ENCODE measurements at regions of chr15 and their contacts with region 1.

Region 1: DNA sequence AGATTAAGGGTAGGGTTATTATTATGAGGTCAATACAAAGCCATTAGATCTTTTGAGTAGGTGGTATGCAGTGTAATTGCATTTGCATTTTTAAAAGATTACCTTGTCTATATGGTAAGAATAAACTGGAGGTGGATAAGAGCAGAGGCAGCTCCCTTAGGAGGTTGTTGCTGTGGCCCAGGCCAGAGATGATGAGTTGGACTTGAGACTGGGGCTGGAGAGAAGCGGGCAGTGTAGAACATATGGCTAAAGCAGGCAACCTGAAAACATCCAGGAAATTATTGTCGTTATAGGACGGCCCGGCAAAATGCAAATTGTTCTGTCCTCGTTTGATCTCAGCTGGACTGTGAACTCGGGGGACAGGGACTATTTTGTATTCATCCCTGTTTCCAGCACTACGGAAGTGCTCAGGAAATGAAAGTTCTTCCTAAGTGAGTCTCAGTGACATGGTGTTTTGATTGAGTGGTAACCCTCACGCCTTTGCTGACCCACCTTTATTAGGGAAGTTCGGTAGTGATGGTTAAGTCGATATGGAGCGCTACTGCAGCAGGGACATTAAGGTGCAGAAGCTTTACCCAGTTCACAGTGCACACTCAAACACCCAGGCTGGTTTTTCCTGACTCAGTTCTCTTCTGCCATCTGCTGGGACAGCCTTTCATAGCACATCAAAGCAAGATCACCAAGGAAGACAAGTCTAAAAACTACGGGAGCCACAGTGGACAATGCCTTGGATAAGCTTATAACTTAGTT is 27.2 kb upstream of the VPS33B start:
- DNase-seq: peak; percentile 73
- ATAC-seq: peak; percentile 94
- H3K4me3 ChIP-seq: no peak overlapping the region
- H3K27ac ChIP-seq: no peak overlapping the region
- H3K4me1 ChIP-seq: peaks cover 0 to 6% of the 10 kb centered on the region in 2 experiments; a peak in 1 of 4 replicates
- H3K27me3 ChIP-seq: peaks cover 32% of the 10 kb centered on the region
- CTCF ChIP-seq: peak; percentile 68 to 74 (median 73); a peak in 5 of 6 replicates
- POLR2A ChIP-seq: no peak
- RAD21 ChIP-seq: peak; percentile 87

Region 2: DNA sequence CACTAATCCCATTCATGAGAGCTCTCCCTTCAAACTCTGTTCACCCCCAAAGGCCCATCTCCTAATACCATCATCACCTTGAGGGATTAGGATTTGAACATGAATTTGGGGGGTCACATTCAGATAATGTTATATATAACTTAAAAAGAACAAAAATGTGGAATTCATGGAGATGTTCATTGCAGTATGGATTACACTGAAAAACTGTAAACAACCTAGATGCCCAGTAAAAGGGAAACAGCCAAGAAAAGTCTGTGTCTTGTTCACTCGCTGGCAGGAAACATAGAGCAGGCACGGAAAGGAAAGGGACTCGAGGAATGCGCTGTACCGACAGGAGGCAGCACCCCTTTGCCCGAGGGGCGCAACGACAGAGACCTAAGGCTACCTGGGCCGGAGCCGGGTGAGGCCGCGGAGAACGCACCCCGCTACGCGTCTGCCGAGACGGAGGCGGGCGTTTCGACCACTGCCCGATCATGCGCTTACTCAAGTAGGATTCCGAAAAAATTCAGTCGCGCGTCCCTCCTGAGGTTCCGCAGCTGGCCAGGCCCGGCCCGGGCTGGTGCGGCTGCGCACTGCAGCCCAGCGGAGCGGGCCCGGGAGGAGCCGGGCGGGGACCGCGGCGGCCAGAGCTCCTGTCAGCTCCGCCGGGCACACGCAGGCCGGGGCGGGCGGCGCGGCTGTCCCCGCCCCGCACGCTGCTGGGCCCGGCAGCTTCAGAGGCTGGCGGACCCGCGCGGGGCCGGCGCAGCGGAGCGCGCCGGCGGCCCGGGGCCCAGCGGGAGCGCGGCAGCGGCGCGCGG is 147.3 kb before region 1 on chr15:
- CTCF ChIA-PET with region 1: interaction called, 8 read pairs
- POLR2A ChIA-PET with region 1: no interaction called
- RAD21 ChIA-PET with region 1: no interaction called
- intact Hi-C with region 1: loop called (anchors 2 kb)
- DNase-seq: peak; percentile 49
- ATAC-seq: peak; percentile 88
- H3K4me3 ChIP-seq: peak overlapping the region; percentile 70 to 84
- H3K27ac ChIP-seq: peak overlapping the region; percentile 87
- H3K4me1 ChIP-seq: peaks cover 10 to 20% of the 10 kb centered on the region in 2 experiments; a peak in 3 of 4 replicates
- H3K27me3 ChIP-seq: no peaks in the 10 kb centered on the region
- CTCF ChIP-seq: peak; percentile 64 to 90 (median 74)
- POLR2A ChIP-seq: peak; percentile 86
- RAD21 ChIP-seq: peak; percentile 54

Region 3: DNA sequence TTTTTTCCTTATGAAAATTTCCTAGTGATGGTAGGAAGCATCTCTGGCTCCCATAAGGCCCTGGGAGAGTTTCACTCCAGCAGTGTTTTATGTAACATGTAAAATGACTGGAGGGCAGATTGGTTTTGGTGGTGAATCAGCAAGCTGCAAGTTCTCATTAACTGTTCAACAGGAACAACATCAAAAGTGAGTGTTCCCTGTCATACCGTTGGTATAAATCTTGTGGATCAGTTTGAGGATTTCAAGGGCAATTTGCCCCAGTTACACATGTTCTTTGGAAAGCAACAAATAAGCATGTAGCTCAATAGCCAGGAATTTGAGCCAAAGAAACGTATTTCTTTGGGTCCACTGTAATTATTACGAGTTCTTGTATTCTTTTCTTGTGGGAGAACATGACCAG is 396.2 kb after region 1 on chr15:
- CTCF ChIA-PET with region 1: no interaction called
- POLR2A ChIA-PET with region 1: no interaction called
- RAD21 ChIA-PET with region 1: no interaction called
- intact Hi-C with region 1: no loop called
- DNase-seq: no peak
- ATAC-seq: no peak
- H3K4me3 ChIP-seq: no peak overlapping the region
- H3K27ac ChIP-seq: no peak overlapping the region
- H3K4me1 ChIP-seq: no peaks in the 10 kb centered on the region
- H3K27me3 ChIP-seq: peaks cover 8% of the 10 kb centered on the region; the same call in 1 of the 2 replicates
- CTCF ChIP-seq: no peak
- POLR2A ChIP-seq: no peak
- RAD21 ChIP-seq: no peak

Measured in HCT116 (cell line).